ENCODE measurements at regions of chr3 and their contacts with region 1.

Region 1: DNA sequence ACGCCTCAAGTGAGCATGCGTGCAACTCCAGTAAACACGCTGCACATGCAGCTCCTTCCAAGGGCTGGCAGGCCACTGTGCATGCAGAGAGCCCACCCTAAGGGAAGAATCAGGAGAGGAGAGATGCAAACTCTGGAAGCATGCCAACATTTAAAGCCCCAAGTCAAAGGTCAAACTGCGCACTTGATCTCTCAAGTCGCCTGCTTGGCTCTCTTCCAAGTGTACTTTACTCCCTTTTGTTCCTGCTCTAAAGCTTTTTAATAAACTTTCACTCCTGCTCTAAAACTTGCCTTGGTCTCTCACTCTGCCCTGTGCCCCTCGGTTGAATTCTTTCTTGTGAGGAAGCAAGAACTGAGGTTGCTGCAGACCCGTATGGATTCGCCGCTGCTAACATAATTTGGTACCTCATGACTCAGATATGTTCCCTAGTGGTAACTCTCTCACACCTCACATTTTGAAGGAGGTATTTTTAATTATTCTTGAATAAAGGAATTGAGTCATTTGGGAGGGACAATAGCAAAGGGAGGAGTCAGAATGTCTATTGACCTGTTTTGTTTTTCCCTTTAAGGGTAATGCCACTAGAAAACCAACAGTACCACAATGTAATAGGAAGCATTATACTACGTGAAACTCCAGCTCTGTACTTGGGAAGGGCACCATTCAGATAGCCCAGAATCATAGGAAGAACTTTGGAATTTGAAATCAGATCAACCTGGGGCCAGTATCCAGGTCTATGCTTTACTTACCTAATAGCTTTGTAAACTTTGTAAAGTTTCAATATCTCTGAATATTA is 19.6 kb upstream of the DGKG start:
- DNase-seq: no peak
- ATAC-seq: no peak
- H3K4me3 ChIP-seq: no peak overlapping the region
- H3K27ac ChIP-seq: peak overlapping the region in 9 of 12 donors; percentile 78 to 98 (median 92)
- H3K4me1 ChIP-seq: peaks cover 0 to 36% (median 16%) of the 10 kb centered on the region in 12 donors
- H3K27me3 ChIP-seq: no peaks in the 10 kb centered on the region
- CTCF ChIP-seq: no peak
- POLR2A ChIP-seq: no peak

Region 2: DNA sequence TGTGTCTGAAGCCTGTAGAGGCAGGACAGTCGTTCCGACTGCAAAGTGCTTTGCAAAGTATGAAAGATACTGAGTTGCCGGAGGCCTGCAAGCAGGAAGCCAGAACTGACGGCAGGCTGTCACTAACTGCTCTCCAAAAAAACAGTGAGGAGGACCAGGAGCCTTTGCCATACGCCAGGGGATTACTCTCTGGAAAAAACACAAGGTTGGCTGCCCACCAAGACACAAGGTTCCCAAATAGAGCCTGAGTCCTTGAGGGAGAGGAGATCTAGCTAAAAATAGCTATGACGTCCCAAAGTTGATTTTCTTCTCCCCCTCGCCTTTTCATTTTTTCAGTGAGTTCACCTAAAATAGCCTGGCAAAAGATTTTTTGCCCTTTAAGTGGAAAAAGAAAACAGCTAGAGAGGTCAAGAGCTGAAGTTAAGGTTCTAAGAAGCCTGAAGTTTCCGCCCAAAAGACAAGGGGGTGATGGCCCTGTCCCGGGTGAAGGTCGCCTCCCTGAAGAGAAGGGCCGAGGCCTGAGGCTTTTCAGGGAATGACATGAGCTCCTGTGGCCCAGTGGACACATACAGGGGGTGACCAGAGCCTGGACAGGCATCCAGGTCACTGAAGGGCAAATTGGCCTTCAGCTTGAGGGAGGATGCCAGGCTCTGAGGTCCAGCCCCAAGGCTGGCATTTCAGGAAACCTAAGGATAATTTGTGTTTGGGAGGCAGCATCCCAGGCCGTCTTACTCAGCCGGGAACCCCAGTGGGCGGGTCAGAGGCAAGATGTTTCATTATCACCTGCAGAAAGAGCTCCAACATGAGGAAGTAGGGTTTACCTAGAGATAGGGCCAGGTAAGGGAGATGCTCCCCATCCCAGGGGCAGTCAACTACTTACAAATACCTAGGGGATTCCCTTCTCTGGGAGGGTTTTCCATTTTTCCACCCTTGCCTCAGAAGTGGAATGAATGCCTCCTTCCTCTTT is 25.3 kb after region 1 on chr3:
- intact Hi-C with region 1: loop called in 1 of 10 experiments (anchors 2 kb)
- DNase-seq: peak; percentile 68 to 88 (median 87)
- ATAC-seq: peak; percentile 92 to 98 (median 97)
- H3K4me3 ChIP-seq: no peak overlapping the region
- H3K27ac ChIP-seq: peak overlapping the region; percentile 74 to 95 (median 89)
- H3K4me1 ChIP-seq: peaks cover 0 to 25% (median 13%) of the 10 kb centered on the region in 12 donors
- H3K27me3 ChIP-seq: no peaks in the 10 kb centered on the region
- CTCF ChIP-seq: no peak
- POLR2A ChIP-seq: no peak